Left cardiac atrium (tissue), 4 donors: ENCODE measurements at regions of chr1 and their contacts with region 1.

Region 1: GRCh38 chr1:36223993-36224536 is at the start of gene THRAP3:
- DNase-seq: peak; percentile 100
- ATAC-seq: peak; percentile 96 to 98
- total RNA-seq, gene THRAP3: 55.9 to 77.0 TPM

Region 2: DNA sequence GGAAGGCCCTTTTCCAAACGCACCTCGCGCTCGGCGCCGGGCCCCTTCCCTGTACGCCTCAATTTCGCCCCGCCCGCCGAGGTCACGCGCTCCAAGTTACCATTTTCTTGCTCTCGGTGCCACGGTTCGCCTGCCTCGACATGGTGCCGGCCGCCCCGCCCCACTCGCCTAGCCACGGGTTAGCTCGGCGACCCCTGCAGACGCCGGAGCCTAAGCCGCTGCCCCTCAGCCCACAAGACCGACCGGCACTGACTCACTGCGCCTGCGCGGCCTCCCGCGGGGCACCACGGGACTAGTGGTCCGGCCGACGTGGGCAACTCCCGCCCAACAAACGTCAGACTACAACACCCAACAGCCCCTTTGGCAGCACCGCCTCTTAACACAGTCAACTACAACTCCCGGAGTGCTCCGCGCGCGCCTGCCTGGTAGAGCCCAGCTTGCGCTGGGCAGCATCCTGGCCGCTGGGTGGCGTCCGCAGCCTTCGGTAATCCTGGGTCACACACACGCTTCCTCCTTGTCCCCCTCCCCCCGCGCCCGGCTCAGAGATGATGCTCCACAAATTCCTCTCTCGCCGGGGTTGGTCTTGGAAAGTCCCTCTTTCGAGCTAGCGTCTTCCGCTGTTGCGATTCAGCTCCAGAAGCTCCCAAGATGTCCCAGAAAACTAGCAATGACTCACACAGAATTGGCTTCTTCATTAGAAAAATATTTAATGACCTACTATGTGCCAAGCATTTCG is 74.7 kb before region 1 on chr1 and contains the start of gene TRAPPC3:
- intact Hi-C with region 1: loop called in 1 of 2 experiments (anchors 5 kb)
- DNase-seq: peak; percentile 100
- ATAC-seq: peak; percentile 92 to 93
- total RNA-seq, gene TRAPPC3: 53.3 to 64.2 TPM

Region 3: DNA sequence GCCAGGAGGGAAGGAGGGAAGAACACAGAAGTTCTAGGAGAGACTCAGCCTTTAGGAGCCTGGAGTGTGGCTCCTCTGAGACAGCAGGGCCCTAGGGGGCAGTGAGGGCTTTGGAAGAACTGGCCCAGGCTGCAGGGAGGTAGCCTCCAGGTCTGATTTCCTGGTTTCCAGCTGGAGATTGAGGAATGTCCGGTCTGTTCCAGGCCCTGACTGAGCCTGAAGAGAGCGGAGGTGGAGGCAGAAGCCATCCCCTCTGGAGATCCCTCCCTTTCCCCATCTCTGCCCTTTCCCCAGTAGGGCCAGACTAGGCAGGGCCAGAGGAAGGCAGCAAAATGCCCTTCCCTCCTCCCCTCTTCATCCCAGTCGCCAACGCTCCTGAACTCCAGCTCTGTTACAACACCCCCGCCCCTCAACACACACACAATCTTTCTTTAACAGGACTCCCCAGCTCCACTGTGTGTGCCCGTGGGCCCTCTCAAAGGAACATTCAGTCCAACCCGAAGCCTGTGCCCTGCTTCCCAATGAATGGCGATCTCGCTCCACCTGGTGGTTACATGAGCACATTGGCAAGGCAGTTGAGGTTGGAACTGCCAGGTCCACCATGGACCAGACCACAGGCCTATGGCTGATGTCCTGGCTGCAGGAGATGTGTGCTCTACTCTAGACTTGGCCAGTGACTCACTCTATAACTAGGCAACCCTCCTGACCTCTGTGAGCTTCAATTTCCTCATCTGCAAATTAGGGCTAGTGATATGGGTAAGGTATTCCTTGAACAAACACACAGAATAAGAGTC is 36.1 kb before region 1 on chr1:
- intact Hi-C with region 1: no loop called
- DNase-seq: peak; percentile 87
- ATAC-seq: peak; percentile 93 to 94

Region 4: DNA sequence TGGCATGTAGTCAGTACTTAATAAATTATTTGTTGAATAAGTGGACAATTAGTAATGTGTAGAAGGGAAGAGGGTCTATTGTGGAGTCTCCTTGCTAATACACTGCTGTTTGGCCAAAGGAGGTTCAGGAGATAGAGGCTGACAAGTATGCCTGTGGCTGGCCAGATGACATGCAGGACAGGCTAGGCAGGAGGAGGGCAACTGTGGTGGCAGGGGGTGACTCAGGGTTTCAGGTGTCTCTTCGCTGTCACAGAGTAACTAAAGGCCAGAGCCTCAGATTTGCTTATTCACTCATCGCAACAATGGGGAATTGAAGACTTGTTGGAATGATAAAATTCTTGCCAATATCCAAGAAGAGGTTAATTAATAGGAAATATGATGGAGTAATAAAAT is 33.3 kb after region 1 on chr1:
- intact Hi-C with region 1: loop called in 1 of 2 experiments (anchors 5 kb)
- DNase-seq: no peak
- ATAC-seq: peak in 1 of 2 donors; percentile 66